Endothelial cell of umbilical vein (primary cell): ENCODE measurements at regions of chr4 and their contacts with region 1.

Region 1: GRCh38 chr4:106287353-106287969 is 28.5 kb downstream of the TBCK start:
- DNase-seq: peak; percentile 85
- H3K4me3 ChIP-seq: no peak overlapping the region
- H3K27ac ChIP-seq: peak overlapping the region; percentile 79
- H3K4me1 ChIP-seq: peaks cover 9% of the 10 kb centered on the region
- H3K27me3 ChIP-seq: no peaks in the 10 kb centered on the region
- CTCF ChIP-seq: no peak
- POLR2A ChIP-seq: no peak

Region 2: GRCh38 chr4:106273831-106274230 is 13.6 kb before region 1 on chr4:
- CTCF ChIA-PET with region 1: no interaction called
- POLR2A ChIA-PET with region 1: no interaction called
- dilution Hi-C with region 1: no loop called
- intact Hi-C with region 1: loop called (anchors 1 kb)
- DNase-seq: peak; percentile 65
- H3K4me3 ChIP-seq: no peak overlapping the region
- H3K27ac ChIP-seq: peak overlapping the region; percentile 59
- H3K4me1 ChIP-seq: peaks cover 34% of the 10 kb centered on the region
- H3K27me3 ChIP-seq: no peaks in the 10 kb centered on the region
- CTCF ChIP-seq: no peak
- POLR2A ChIP-seq: no peak

Region 3: DNA sequence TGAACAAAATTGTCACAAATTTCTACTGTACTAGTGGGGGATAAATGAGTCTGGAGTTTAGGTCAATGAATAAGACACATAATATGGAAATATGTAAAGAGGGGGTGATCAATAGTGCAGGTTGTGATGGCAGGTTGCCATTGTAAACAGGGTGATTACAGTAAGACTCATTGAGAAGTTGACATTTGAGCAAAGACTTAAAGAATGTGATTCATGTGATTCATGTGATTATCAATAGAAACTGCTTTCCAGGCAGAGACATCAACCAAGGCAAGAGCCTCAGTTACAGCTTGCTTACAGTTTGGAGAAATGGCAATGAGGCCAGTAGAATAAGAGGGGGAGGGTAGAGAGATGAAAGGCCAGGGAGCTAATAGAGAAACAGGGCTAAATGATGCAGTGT is 126.9 kb after region 1 on chr4:
- CTCF ChIA-PET with region 1: no interaction called
- POLR2A ChIA-PET with region 1: no interaction called
- dilution Hi-C with region 1: no loop called
- intact Hi-C with region 1: no loop called
- DNase-seq: no peak
- H3K4me3 ChIP-seq: no peak overlapping the region
- H3K27ac ChIP-seq: no peak overlapping the region
- H3K4me1 ChIP-seq: no peaks in the 10 kb centered on the region
- H3K27me3 ChIP-seq: no peaks in the 10 kb centered on the region
- CTCF ChIP-seq: no peak
- POLR2A ChIP-seq: no peak